PC-9 (cell line): ENCODE measurements at regions of chr17 and their contacts with region 1.

Region 1: GRCh38 chr17:81821603-81822311 is 11.3 kb downstream of the MCRIP1 start:
- DNase-seq: peak in 1 of 2 experiments; percentile 80
- H3K4me3 ChIP-seq: no peak overlapping the region
- H3K27ac ChIP-seq: no peak overlapping the region
- H3K4me1 ChIP-seq: no peaks in the 10 kb centered on the region
- H3K27me3 ChIP-seq: no peaks in the 10 kb centered on the region
- CTCF ChIP-seq: no peak; the same call in 1 of the 2 replicates

Region 2: DNA sequence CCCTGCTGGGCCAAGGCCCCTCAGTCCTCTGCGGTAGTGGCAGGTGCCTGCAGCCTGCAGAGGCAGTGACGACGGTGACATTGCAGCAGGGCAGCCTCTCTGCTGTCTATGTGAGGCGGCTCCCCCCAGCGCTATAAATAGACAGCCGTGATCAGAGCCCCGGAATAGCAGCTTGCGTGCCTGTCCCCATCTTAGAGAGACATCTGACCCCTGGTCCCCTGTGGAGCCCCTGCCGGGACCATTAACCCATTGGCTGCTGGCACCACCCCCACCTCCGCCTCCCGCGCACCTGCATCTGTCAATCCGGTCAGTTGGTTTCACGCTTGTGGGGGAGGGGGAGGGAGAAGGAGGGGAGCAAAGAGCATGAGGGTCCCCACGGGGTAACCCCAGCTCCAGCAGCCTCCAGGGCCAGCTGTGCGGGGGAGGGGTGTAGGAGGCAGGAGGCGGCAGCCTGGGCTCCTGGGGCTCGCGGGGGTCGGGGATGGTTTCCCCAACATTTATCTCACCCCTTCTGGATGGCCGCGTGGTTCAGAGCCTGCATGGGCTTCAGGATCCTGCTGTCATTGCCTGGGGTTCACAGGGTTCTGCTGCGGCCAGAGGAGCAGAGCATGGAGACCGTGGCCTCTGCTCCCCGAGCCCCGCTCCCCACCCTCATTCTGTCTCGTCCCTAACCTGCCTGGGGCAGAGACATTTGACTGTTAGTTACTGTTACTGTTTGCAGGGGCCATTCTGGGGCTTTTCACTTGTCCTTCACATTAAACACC is 120.2 kb after region 1 on chr17:
- CTCF ChIA-PET with region 1: no interaction called
- POLR2A ChIA-PET with region 1: no interaction called
- intact Hi-C with region 1: no loop called
- DNase-seq: no peak
- H3K4me3 ChIP-seq: no peak overlapping the region
- H3K27ac ChIP-seq: no peak overlapping the region
- H3K4me1 ChIP-seq: no peaks in the 10 kb centered on the region
- H3K27me3 ChIP-seq: no peaks in the 10 kb centered on the region
- CTCF ChIP-seq: no peak

Region 3: DNA sequence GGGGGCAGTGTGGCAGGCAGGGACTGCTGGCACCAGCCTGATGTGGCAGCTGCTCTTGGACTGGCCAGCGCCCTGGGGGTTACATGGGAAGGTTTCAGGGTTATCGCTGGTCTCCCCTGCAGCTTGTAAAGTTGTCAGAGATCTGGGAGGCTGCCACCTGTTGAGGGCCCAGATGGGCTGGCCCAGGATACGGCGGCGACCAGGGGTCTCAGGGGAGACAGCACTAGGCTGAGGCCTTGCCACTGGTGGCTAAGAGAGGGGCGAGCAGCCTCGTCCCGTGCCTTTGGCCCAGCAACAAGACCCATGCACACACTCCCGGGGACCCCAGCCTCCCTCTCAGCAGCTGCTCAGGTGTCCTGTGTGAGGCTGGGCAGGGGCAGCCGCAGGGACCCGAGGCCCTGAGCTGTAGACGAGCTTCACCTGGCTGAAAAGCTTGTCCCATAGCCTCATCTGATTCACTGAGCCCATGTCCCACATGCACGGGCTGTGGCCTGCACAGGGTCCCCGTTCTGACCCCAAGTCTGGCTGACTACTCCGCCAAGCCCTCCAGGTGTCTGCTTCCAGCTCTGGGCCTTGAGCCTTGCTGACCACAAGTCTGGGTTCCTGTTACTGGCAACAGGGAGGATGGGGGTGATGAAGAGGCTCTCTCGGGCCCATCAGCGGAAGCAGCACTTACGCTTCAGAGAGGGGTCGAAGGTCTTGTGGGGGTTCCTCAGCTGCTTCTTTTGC is 237.7 kb after region 1 on chr17:
- CTCF ChIA-PET with region 1: no interaction called
- POLR2A ChIA-PET with region 1: interaction called, 10 read pairs
- intact Hi-C with region 1: no loop called
- DNase-seq: no peak
- H3K4me3 ChIP-seq: no peak overlapping the region
- H3K27ac ChIP-seq: no peak overlapping the region
- H3K4me1 ChIP-seq: 0 out of 2 replicates have a peak, but pooled peaks cover 5% of the 10 kb centered on the region
- H3K27me3 ChIP-seq: no peaks in the 10 kb centered on the region
- CTCF ChIP-seq: no peak